Activated T-helper 1 cell treated with anti-CD3 and anti-CD28 coated beads, Interleukin-12 subunit alpha, Interleukin-12 subunit beta, Interleukin-2, Interleukin-4 antibody, amounts not matched to agents 30 ng/mL and 10 ng/mL and 1 ng/mL, durations not matched to agents 14 hours and 24 hours and 36 hours (primary cell): ENCODE measurements at regions of chr12 and their contacts with region 1.

Region 1: GRCh38 chr12:62799126-62799736 is 135.7 kb downstream of the PPM1H start:
- DNase-seq: peak; percentile 42
- H3K4me3 Mint-ChIP-seq: no peak overlapping the region
- H3K27ac Mint-ChIP-seq: no peak overlapping the region
- H3K4me1 Mint-ChIP-seq: no peaks in the 10 kb centered on the region
- H3K27me3 Mint-ChIP-seq: peaks cover 8% of the 10 kb centered on the region

Region 2: GRCh38 chr12:62581288-62582064 is 217.8 kb before region 1 on chr12:
- intact Hi-C with region 1: loop called (anchors 1 kb)
- DNase-seq: no peak
- H3K4me3 Mint-ChIP-seq: no peak overlapping the region
- H3K27ac Mint-ChIP-seq: no peak overlapping the region
- H3K4me1 Mint-ChIP-seq: no peaks in the 10 kb centered on the region
- H3K27me3 Mint-ChIP-seq: no peaks in the 10 kb centered on the region

Region 3: GRCh38 chr12:62767496-62767895 is 31.7 kb before region 1 on chr12:
- intact Hi-C with region 1: no loop called
- DNase-seq: no peak
- H3K4me3 Mint-ChIP-seq: no peak overlapping the region
- H3K27ac Mint-ChIP-seq: no peak overlapping the region
- H3K4me1 Mint-ChIP-seq: peaks cover 7% of the 10 kb centered on the region
- H3K27me3 Mint-ChIP-seq: peaks cover 10% of the 10 kb centered on the region